PC-9 (cell line): ENCODE measurements at regions of chr5 and their contacts with region 1.

Region 1: GRCh38 chr5:65721720-65722574 is at the starts of genes NLN and SGTB:
- DNase-seq: peak; percentile 44 to 86
- H3K4me3 ChIP-seq: peak within 1 kb of the TSS; percentile 61
- H3K27ac ChIP-seq: peak within 1 kb of the TSS; percentile 48
- H3K4me1 ChIP-seq: peaks cover 26% of the 10 kb centered on the region
- H3K27me3 ChIP-seq: no peaks in the 10 kb centered on the region
- CTCF ChIP-seq: no peak
- total RNA-seq, gene NLN: 56.7 and 74.7 TPM in 2 replicates
- total RNA-seq, gene SGTB: 8.8 and 9.8 TPM in 2 replicates

Region 2: GRCh38 chr5:65555287-65555686 is 166.7 kb before region 1 on chr5:
- CTCF ChIA-PET with region 1: interaction called, 10 read pairs
- POLR2A ChIA-PET with region 1: no interaction called
- intact Hi-C with region 1: no loop called
- DNase-seq: no peak
- H3K4me3 ChIP-seq: no peak overlapping the region
- H3K27ac ChIP-seq: no peak overlapping the region
- H3K4me1 ChIP-seq: no peaks in the 10 kb centered on the region
- H3K27me3 ChIP-seq: no peaks in the 10 kb centered on the region
- CTCF ChIP-seq: no peak

Region 3: GRCh38 chr5:65749956-65750355 is 28.0 kb after region 1 on chr5:
- CTCF ChIA-PET with region 1: no interaction called
- POLR2A ChIA-PET with region 1: no interaction called
- intact Hi-C with region 1: no loop called
- DNase-seq: no peak
- H3K4me3 ChIP-seq: no peak overlapping the region
- H3K27ac ChIP-seq: no peak overlapping the region
- H3K4me1 ChIP-seq: no peaks in the 10 kb centered on the region
- H3K27me3 ChIP-seq: no peaks in the 10 kb centered on the region
- CTCF ChIP-seq: no peak